H1 (cell line): ENCODE measurements at regions of chr1 and their contacts with region 1.

Region 1: GRCh38 chr1:193729429-193729828 is 543.0 kb upstream of the B3GALT2 start:
- DNase-seq: no peak
- H3K4me3 ChIP-seq: no peak overlapping the region
- H3K27ac ChIP-seq: no peak overlapping the region
- H3K4me1 ChIP-seq: peaks cover 0 to 8% (median 2%) of the 10 kb centered on the region in 4 experiments; a peak in 1 of 7 replicates
- H3K27me3 ChIP-seq: peaks cover 3 to 9% (median 6%) of the 10 kb centered on the region in 4 experiments; a peak in 4 of 7 replicates
- CTCF ChIP-seq: no peak
- EP300 ChIP-seq: no peak
- POLR2A ChIP-seq: no peak
- RAD21 ChIP-seq: no peak

Region 2: GRCh38 chr1:193054169-193054675 is 675.2 kb before region 1 on chr1:
- CTCF ChIA-PET with region 1: no interaction called
- POLR2A ChIA-PET with region 1: no interaction called
- DNase-seq: no peak
- H3K4me3 ChIP-seq: no peak overlapping the region
- H3K27ac ChIP-seq: no peak overlapping the region
- H3K4me1 ChIP-seq: peaks cover 0 to 3% (median 0%) of the 10 kb centered on the region in 4 experiments; a peak in 2 of 7 replicates
- H3K27me3 ChIP-seq: no peaks in the 10 kb centered on the region
- CTCF ChIP-seq: no peak
- EP300 ChIP-seq: no peak
- POLR2A ChIP-seq: no peak
- RAD21 ChIP-seq: no peak

Region 3: DNA sequence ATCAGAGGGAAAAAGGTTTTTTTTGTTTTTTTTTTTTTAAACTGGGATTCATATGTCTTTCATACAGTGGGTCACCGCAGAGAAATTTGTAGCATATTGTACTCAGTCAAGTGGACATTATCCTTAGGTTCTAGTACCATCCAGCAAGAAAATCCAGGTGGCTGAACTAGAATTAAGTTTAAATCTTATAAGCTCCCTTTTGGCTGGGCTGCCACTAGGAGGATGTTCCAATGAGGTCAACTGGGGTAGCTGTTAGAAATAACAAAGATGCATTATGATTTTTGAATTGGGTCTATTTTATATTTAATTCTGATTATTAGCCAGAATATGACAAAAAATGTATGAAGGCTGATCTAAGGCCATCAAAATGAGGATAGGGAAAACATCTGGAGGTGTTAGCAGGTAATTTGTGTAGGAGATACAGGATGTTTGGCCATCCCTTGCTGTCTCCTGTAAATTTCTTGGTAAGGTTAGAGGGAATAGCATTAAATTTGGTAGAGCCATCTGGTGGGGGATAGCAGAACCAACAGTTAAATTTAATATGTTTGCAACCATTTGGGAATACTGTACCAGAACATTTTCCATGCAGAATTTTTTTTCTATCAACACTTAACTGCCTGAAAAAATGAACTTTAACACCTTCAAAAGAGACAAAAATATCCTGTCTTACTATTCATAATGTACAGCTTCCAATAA is 25.5 kb after region 1 on chr1:
- CTCF ChIA-PET with region 1: interaction called, 12 read pairs
- POLR2A ChIA-PET with region 1: no interaction called
- DNase-seq: no peak
- H3K4me3 ChIP-seq: no peak overlapping the region
- H3K27ac ChIP-seq: no peak overlapping the region
- H3K4me1 ChIP-seq: peaks cover 0 to 4% (median 0%) of the 10 kb centered on the region in 4 experiments; a peak in 1 of 7 replicates
- H3K27me3 ChIP-seq: no peaks in the 10 kb centered on the region
- CTCF ChIP-seq: peak in 2 of 3 experiments; percentile 5 to 21; a peak in 2 of 4 replicates
- EP300 ChIP-seq: no peak
- POLR2A ChIP-seq: no peak
- RAD21 ChIP-seq: peak; percentile 48 to 50